ENCODE measurements at regions of chr10 and their contacts with region 1.

Region 1: GRCh38 chr10:58952747-58953466 is 223.5 kb upstream of the PHYHIPL start:
- DNase-seq: peak; percentile 24
- ATAC-seq: peak; percentile 76
- H3K4me3 ChIP-seq: no peak overlapping the region
- H3K27ac ChIP-seq: no peak overlapping the region
- H3K4me1 ChIP-seq: peaks cover 3 to 27% of the 10 kb centered on the region in 2 experiments; a peak in 3 of 4 replicates
- H3K27me3 ChIP-seq: no peaks in the 10 kb centered on the region
- CTCF ChIP-seq: peak; percentile 50 to 81 (median 61); a peak in 5 of 6 replicates
- POLR2A ChIP-seq: no peak
- RAD21 ChIP-seq: peak; percentile 72

Region 2: DNA sequence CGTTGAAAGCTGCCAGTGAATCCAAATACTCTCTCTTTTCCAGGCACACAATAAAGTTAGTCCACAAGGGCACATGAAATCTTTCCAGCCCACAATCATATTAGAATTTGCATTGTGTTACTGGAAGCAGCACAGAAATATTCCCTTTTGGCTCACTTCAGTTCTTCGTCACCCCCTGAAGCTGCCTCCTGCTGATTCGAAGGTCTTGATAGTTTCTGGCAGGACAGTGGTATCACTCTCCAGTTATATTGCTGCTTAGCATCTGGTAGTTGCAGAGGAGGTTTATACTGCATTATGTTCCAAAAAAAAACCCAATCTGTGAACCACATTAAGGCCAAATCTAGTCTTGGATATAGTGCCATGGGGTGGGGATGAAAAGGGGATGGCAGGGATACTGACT is 187.0 kb before region 1 on chr10:
- CTCF ChIA-PET with region 1: no interaction called
- POLR2A ChIA-PET with region 1: no interaction called
- RAD21 ChIA-PET with region 1: no interaction called
- intact Hi-C with region 1: no loop called
- DNase-seq: no peak
- ATAC-seq: no peak
- H3K4me3 ChIP-seq: no peak overlapping the region
- H3K27ac ChIP-seq: no peak overlapping the region
- H3K4me1 ChIP-seq: no peaks in the 10 kb centered on the region
- H3K27me3 ChIP-seq: no peaks in the 10 kb centered on the region
- CTCF ChIP-seq: no peak
- POLR2A ChIP-seq: no peak
- RAD21 ChIP-seq: no peak

Region 3: GRCh38 chr10:59181668-59182067 is 228.8 kb after region 1 on chr10:
- CTCF ChIA-PET with region 1: interaction called, 3 read pairs
- POLR2A ChIA-PET with region 1: no interaction called
- RAD21 ChIA-PET with region 1: no interaction called
- intact Hi-C with region 1: loop called (anchors 1 kb)
- DNase-seq: peak; percentile 50
- ATAC-seq: peak; percentile 91
- H3K4me3 ChIP-seq: no peak overlapping the region
- H3K27ac ChIP-seq: no peak overlapping the region
- H3K4me1 ChIP-seq: no peaks in the 10 kb centered on the region
- H3K27me3 ChIP-seq: no peaks in the 10 kb centered on the region
- CTCF ChIP-seq: peak; percentile 46 to 69 (median 55); a peak in 5 of 6 replicates
- POLR2A ChIP-seq: no peak
- RAD21 ChIP-seq: peak; percentile 69

Region 4: DNA sequence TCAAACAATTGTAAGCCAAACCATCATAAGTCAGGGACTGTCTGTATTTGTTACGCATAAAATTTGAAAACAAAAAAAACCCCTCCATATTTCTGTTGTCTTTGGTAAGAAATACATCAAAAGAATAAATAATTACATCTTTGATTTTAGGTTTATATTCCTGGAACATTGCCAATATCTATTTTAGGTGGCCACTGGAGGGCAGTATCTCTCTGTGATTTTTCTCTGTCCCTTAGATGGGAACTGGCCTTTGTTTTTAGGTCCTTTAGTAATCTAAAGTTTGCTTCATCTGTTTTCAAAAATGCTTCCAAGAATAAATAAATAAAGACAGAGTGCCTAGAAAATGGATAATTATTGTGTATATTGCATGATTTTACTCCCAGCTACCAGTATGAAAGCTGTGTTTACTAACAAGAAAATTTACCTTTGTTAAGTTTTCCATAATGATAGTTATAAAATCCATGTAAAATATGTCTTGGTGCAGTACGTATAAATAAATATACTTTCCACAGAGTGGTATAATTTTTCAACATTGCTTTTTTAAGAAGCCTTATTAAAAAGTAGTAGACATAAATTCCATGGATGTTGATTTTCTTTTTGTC is 287.8 kb after region 1 on chr10:
- CTCF ChIA-PET with region 1: interaction called, 5 read pairs
- POLR2A ChIA-PET with region 1: no interaction called
- RAD21 ChIA-PET with region 1: no interaction called
- intact Hi-C with region 1: loop called (anchors 1 kb)
- DNase-seq: peak; percentile 27
- ATAC-seq: no peak
- H3K4me3 ChIP-seq: no peak overlapping the region
- H3K27ac ChIP-seq: no peak overlapping the region
- H3K4me1 ChIP-seq: no peaks in the 10 kb centered on the region
- H3K27me3 ChIP-seq: no peaks in the 10 kb centered on the region
- CTCF ChIP-seq: peak; percentile 41 to 72 (median 58); a peak in 4 of 6 replicates
- POLR2A ChIP-seq: no peak
- RAD21 ChIP-seq: peak; percentile 74

Region 5: DNA sequence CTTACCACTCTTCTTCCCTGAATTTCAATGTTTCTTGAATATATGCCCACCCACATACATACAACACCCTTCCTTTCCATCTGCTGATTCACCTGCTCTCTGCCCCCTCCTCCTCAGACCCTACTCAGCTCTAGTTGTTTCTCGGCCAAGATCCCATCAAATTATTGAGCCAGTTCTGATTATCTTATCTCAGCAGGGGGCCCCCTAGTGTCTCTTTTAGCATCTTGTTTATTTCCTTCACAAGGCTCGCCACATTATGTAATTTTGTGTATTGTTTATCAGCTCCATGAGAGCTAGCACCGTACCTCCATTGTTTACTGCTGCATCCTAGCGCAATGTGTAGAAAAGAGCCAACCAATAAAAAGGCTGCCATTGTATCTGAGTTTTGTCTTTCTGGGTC is 337.5 kb after region 1 on chr10:
- CTCF ChIA-PET with region 1: no interaction called
- POLR2A ChIA-PET with region 1: no interaction called
- RAD21 ChIA-PET with region 1: no interaction called
- intact Hi-C with region 1: no loop called
- DNase-seq: no peak
- ATAC-seq: no peak
- H3K4me3 ChIP-seq: no peak overlapping the region
- H3K27ac ChIP-seq: no peak overlapping the region
- H3K4me1 ChIP-seq: no peaks in the 10 kb centered on the region
- H3K27me3 ChIP-seq: peaks cover 16% of the 10 kb centered on the region; the same call in 1 of the 2 replicates
- CTCF ChIP-seq: peak in 1 of 3 experiments; percentile 16; a peak in 1 of 6 replicates
- POLR2A ChIP-seq: no peak
- RAD21 ChIP-seq: peak; percentile 26; the same call in 1 of the 2 replicates

Region 6: GRCh38 chr10:59303018-59303417 is 350.1 kb after region 1 on chr10:
- CTCF ChIA-PET with region 1: no interaction called
- POLR2A ChIA-PET with region 1: no interaction called
- RAD21 ChIA-PET with region 1: no interaction called
- intact Hi-C with region 1: no loop called
- DNase-seq: no peak
- ATAC-seq: no peak
- H3K4me3 ChIP-seq: no peak overlapping the region
- H3K27ac ChIP-seq: no peak overlapping the region
- H3K4me1 ChIP-seq: no peaks in the 10 kb centered on the region
- H3K27me3 ChIP-seq: 0 out of 2 replicates have a peak, but pooled peaks cover 5% of the 10 kb centered on the region
- CTCF ChIP-seq: no peak
- POLR2A ChIP-seq: no peak
- RAD21 ChIP-seq: no peak

Region 7: GRCh38 chr10:59580026-59580863 is 627.3 kb after region 1 on chr10:
- CTCF ChIA-PET with region 1: no interaction called
- POLR2A ChIA-PET with region 1: no interaction called
- RAD21 ChIA-PET with region 1: interaction called in 1 of 2 experiments, 3 read pairs
- intact Hi-C with region 1: loop called (anchors 5 kb)
- DNase-seq: peak; percentile 32
- ATAC-seq: peak; percentile 67
- H3K4me3 ChIP-seq: no peak overlapping the region
- H3K27ac ChIP-seq: no peak overlapping the region
- H3K4me1 ChIP-seq: no peaks in the 10 kb centered on the region
- H3K27me3 ChIP-seq: peaks cover 17% of the 10 kb centered on the region; the same call in 1 of the 2 replicates
- CTCF ChIP-seq: peak; percentile 35 to 61 (median 41); a peak in 4 of 6 replicates
- POLR2A ChIP-seq: no peak
- RAD21 ChIP-seq: peak; percentile 66

Region 8: DNA sequence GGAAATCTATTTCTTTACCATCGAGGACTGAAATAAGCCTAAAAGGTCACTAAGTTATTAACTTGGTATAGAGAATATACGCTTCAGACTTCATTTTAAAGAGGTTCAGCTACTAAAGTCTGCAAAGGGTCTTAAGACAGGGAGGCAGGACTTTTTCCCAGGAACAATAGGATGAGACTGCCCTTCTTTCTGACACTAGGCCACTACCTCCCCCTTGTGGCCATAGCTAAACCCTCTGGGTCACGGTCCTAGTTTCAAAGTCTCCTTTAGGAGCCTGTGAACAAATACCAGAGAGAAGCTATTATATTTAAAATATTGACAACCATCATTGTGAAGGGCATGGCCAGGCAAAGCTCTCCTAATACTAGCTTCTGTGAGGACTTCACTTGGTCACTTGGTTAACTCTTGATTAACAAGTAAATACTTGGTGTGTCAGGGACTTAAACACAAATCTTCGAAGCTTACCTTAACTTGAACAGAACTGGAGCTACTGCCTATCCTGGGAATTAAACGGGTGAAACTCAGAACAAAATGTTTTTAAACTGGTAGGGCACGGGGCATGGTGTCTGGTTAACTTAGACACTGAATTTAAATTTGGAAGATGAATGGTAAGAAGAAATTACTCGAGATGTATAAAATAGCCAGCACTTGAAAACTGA is 877.8 kb after region 1 on chr10:
- CTCF ChIA-PET with region 1: no interaction called
- POLR2A ChIA-PET with region 1: no interaction called
- RAD21 ChIA-PET with region 1: no interaction called
- intact Hi-C with region 1: loop called (anchors 10 kb)
- DNase-seq: peak; percentile 34
- ATAC-seq: peak; percentile 90
- H3K4me3 ChIP-seq: no peak overlapping the region
- H3K27ac ChIP-seq: no peak overlapping the region
- H3K4me1 ChIP-seq: no peaks in the 10 kb centered on the region
- H3K27me3 ChIP-seq: no peaks in the 10 kb centered on the region
- CTCF ChIP-seq: peak; percentile 59 to 92 (median 86); a peak in 5 of 6 replicates
- POLR2A ChIP-seq: no peak
- RAD21 ChIP-seq: peak; percentile 56

Measured in HCT116 (cell line).